Naive thymus-derived CD4-positive, alpha-beta T cell (primary cell): ENCODE measurements at regions of chr11 and their contacts with region 1.

Region 1: DNA sequence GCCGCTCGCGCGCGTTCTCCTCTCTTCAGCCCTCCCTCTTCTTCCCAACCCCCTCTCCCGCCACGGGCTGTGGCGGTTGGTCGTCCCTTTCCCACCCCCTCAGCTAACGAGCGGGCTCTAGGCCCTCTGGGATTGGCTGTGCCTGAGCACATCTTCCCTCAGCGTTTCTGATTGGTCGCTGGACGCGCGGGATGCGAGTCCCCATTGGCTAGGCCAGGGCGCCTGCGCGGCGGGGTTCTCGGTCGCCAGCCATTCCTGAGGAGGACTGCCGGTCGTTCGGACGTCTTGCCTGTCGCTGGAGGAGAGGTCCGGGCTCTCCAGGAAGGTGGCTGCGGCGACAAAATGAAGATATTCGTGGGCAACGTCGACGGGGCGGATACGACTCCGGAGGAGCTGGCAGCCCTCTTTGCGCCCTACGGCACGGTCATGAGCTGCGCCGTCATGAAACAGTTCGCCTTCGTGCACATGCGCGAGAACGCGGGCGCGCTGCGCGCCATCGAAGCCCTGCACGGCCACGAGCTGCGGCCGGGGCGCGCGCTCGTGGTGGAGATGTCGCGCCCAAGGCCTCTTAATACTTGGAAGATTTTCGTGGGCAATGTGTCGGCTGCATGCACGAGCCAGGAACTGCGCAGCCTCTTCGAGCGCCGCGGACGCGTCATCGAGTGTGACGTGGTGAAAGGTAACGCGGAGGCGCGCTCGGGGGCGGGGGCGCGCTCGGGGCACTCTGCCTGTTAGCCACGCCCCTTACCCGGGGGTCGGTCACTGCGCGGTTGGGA is at the start of gene RBM14:
- DNase-seq: peak; percentile 96 to 99 (median 99)
- ATAC-seq: peak; percentile 88
- H3K4me3 ChIP-seq: peak within 1 kb of the TSS; percentile 97
- H3K4me3 Mint-ChIP-seq: peak within 1 kb of the TSS; percentile 86 to 99 (median 98)
- H3K27ac ChIP-seq: peak within 1 kb of the TSS; percentile 83
- H3K27ac Mint-ChIP-seq: peak within 1 kb of the TSS; percentile 96 to 99 (median 98)
- H3K4me1 ChIP-seq: peaks cover 29 to 30% of the 10 kb centered on the region in 2 donors
- H3K4me1 Mint-ChIP-seq: peaks cover 26 to 55% (median 47%) of the 10 kb centered on the region in 7 donors
- H3K27me3 ChIP-seq: no peaks in the 10 kb centered on the region
- H3K27me3 Mint-ChIP-seq: peaks cover 0 to 3% (median 0%) of the 10 kb centered on the region in 5 donors
- total RNA-seq, gene RBM14: 165 to 543 (median 192) TPM

Region 2: GRCh38 chr11:66268283-66268951 is 348.1 kb before region 1 on chr11 and contains the start of gene RAB1B:
- CTCF ChIA-PET with region 1: no interaction called
- POLR2A ChIA-PET with region 1: no interaction called
- intact Hi-C with region 1: loop called in 1 of 2 experiments (anchors 5 kb)
- DNase-seq: peak; percentile 99 to 100 (median 99)
- ATAC-seq: peak; percentile 89
- H3K4me3 ChIP-seq: peak within 1 kb of the TSS; percentile 91
- H3K4me3 Mint-ChIP-seq: peak within 1 kb of the TSS; percentile 88 to 100 (median 95)
- H3K27ac ChIP-seq: peak within 1 kb of the TSS; percentile 90
- H3K27ac Mint-ChIP-seq: peak within 1 kb of the TSS; percentile 95 to 99 (median 97)
- H3K4me1 ChIP-seq: peaks cover 16 to 38% of the 10 kb centered on the region in 2 donors
- H3K4me1 Mint-ChIP-seq: peaks cover 26 to 48% (median 34%) of the 10 kb centered on the region in 7 donors
- H3K27me3 ChIP-seq: no peaks in the 10 kb centered on the region
- H3K27me3 Mint-ChIP-seq: peaks cover 0 to 3% (median 0%) of the 10 kb centered on the region in 5 donors
- total RNA-seq, gene RAB1B: 60.6 to 151 (median 70.7) TPM

Region 3: DNA sequence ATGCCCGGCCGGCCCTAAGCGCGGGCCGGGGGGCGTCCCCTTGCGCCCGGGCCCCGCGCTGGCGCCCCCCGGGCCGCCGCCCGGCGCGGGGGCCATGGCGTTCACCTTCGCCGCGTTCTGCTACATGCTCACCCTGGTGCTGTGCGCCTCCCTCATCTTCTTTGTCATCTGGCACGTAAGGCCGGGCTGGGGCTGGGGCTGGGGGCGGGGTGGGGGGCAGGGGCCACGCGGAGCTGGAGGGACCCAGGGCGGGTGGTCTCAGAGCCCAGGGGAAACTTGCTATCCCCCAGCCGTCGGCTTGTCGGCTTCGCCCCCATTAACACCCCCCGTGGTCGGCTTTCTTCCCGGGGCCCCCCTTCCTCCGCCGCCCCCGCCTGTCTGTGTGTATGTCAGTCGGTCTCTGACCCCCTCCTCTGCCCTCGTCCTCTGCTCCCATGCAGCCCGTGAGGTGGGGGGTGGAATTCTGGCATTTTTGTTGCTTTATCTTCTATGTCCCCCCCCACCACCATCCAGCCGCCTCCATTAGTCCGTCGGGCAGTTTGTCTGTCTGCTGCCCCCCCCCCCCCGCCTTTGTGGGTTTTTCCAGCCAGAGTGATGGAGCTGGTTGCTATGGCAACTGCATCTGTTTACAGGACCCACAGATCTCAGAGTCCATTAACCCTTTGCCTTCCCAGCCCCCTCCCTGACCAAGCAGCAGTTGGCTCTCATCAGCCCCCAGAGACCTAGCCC is 338.0 kb before region 1 on chr11:
- CTCF ChIA-PET with region 1: no interaction called
- POLR2A ChIA-PET with region 1: no interaction called
- intact Hi-C with region 1: no loop called
- DNase-seq: peak in 1 of 9 donors; percentile 56
- ATAC-seq: no peak
- H3K4me3 ChIP-seq: no peak overlapping the region
- H3K4me3 Mint-ChIP-seq: peak overlapping the region in 9 of 10 donors; percentile 44 to 81 (median 66)
- H3K27ac ChIP-seq: no peak overlapping the region
- H3K27ac Mint-ChIP-seq: peak overlapping the region in 4 of 9 donors; percentile 37 to 80 (median 48)
- H3K4me1 ChIP-seq: peaks cover 21 to 22% of the 10 kb centered on the region in 2 donors
- H3K4me1 Mint-ChIP-seq: peaks cover 22 to 44% (median 31%) of the 10 kb centered on the region in 7 donors
- H3K27me3 ChIP-seq: no peaks in the 10 kb centered on the region
- H3K27me3 Mint-ChIP-seq: peaks cover 0 to 14% (median 0%) of the 10 kb centered on the region in 5 donors

Region 4: DNA sequence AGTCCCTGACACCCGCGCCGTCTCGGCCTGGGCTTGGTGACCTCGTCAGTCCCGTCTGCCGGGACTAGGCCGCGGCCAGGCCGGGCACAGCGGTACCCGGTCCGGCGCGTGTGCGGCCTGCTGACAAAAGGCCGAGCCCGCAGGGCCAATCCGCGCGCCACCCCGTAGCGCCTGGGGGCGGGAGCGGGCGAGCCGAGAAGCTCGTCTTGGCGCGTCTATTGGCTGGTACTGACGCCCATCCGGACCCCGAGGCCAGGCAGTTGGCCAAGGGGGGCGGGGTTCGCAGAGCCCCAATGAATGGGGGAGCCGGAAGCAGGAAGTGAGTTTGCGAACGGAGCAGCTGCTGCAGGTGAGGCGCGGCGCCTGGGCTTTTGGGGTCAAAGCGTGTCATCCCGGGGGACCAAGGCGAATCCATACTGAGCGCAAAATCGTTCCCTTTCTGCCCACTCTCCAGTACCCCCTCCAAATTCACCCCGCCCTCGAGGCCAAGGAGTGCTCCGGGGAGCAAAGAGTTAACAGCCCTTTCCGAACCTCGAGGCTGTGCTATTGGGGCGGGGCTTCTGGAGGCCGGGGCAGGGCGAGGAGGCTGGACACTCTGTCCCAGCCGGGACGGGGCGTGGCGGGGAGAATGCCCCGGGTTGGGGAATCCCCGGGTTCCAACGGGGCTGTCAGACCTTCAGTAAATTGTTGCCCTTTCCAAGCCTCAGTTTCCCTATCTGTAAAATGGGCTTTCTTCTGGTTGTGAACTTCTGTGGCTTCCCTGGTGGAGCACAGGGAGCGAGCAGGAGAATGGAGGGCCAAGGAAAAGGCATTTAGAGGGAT is 136.2 kb before region 1 on chr11 and contains the start of gene DPP3:
- CTCF ChIA-PET with region 1: no interaction called
- POLR2A ChIA-PET with region 1: interaction called, 6 read pairs
- intact Hi-C with region 1: loop called in 1 of 2 experiments (anchors 10 kb)
- DNase-seq: peak; percentile 87 to 97 (median 95)
- ATAC-seq: peak; percentile 99
- H3K4me3 ChIP-seq: peak within 1 kb of the TSS; percentile 86
- H3K4me3 Mint-ChIP-seq: peak within 1 kb of the TSS; percentile 86 to 92 (median 90)
- H3K27ac ChIP-seq: peak within 1 kb of the TSS; percentile 90
- H3K27ac Mint-ChIP-seq: peak within 1 kb of the TSS; percentile 75 to 91 (median 90)
- H3K4me1 ChIP-seq: peaks cover 9 to 14% of the 10 kb centered on the region in 2 donors
- H3K4me1 Mint-ChIP-seq: peaks cover 9 to 37% (median 17%) of the 10 kb centered on the region in 7 donors
- H3K27me3 ChIP-seq: no peaks in the 10 kb centered on the region
- H3K27me3 Mint-ChIP-seq: no peaks in the 10 kb centered on the region
- total RNA-seq, gene DPP3: 15.8 to 75.7 (median 19.4) TPM

Region 5: GRCh38 chr11:66592457-66593302 is 23.9 kb before region 1 on chr11 and contains the starts of genes CCDC87 and CCS:
- CTCF ChIA-PET with region 1: interaction called, 3 read pairs
- POLR2A ChIA-PET with region 1: interaction called, 90 read pairs
- intact Hi-C with region 1: loop called (anchors 1 kb)
- DNase-seq: peak; percentile 94 to 98 (median 96)
- ATAC-seq: peak; percentile 98
- H3K4me3 ChIP-seq: peak within 1 kb of the TSS; percentile 98
- H3K4me3 Mint-ChIP-seq: peak within 1 kb of the TSS; percentile 89 to 100 (median 98)
- H3K27ac ChIP-seq: peak within 1 kb of the TSS; percentile 94
- H3K27ac Mint-ChIP-seq: peak within 1 kb of the TSS; percentile 90 to 100 (median 97)
- H3K4me1 ChIP-seq: peaks cover 9 to 30% of the 10 kb centered on the region in 2 donors
- H3K4me1 Mint-ChIP-seq: peaks cover 13 to 40% (median 28%) of the 10 kb centered on the region in 7 donors
- H3K27me3 ChIP-seq: no peaks in the 10 kb centered on the region
- H3K27me3 Mint-ChIP-seq: no peaks in the 10 kb centered on the region
- total RNA-seq, gene CCDC87: 0.11 to 1.2 (median 0.60) TPM in 4 of 5 experiments, not detected in the other
- total RNA-seq, gene CCS: 32.8 to 63.5 (median 42.5) TPM

Region 6: DNA sequence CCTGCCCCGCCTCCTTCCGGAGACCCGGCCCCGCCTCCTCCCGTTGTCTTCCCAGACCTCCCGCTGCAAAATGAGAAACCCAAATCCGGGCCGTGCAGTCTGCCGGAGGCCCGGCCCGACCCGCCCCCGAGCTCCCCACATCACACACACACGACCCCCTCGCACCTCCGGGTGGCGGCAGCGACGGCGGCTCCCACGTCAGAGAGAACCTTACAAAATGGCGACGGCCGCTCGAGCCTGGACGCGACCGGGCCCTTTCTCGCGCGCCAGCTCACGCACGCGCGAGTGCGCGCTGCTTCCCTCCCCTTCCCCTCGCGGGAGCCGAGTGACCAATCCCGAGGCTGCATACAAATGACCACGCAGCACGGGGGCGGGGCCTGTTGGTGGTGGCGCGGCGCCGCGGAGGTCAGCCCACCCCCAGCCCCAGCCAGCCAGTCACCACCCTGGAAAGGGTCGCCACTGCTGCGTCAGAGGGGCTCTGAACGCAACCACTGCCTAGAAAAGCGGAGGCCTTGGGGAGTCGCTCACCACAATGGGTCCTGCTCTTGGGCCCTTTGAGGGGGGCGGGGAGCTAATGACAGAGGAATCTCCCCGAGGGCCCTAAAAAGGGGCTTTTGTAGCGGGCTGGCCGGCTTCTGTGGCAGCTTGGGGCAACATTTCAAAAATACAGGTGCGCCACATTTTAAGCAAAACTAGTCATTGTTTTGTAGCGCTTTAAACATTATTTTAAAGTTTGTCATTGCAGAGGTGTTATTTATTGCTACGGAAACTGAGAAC is 61.2 kb after region 1 on chr11 and contains the start of gene RBM4B:
- CTCF ChIA-PET with region 1: interaction called, 15 read pairs
- POLR2A ChIA-PET with region 1: interaction called, 68 read pairs
- intact Hi-C with region 1: loop called (anchors 1 kb)
- DNase-seq: peak; percentile 89 to 96 (median 94)
- ATAC-seq: peak; percentile 94
- H3K4me3 ChIP-seq: peak within 1 kb of the TSS; percentile 100
- H3K4me3 Mint-ChIP-seq: peak within 1 kb of the TSS; percentile 87 to 98 (median 96)
- H3K27ac ChIP-seq: peak within 1 kb of the TSS; percentile 95
- H3K27ac Mint-ChIP-seq: peak within 1 kb of the TSS; percentile 94 to 100 (median 99)
- H3K4me1 ChIP-seq: peaks cover 23 to 31% of the 10 kb centered on the region in 2 donors
- H3K4me1 Mint-ChIP-seq: peaks cover 21 to 49% (median 37%) of the 10 kb centered on the region in 7 donors
- H3K27me3 ChIP-seq: no peaks in the 10 kb centered on the region
- H3K27me3 Mint-ChIP-seq: no peaks in the 10 kb centered on the region
- total RNA-seq, gene RBM4B: 9.8 to 27.2 (median 19.7) TPM

Region 7: GRCh38 chr11:66694732-66695207 is 78.2 kb after region 1 on chr11:
- CTCF ChIA-PET with region 1: no interaction called
- POLR2A ChIA-PET with region 1: no interaction called
- intact Hi-C with region 1: no loop called
- DNase-seq: peak; percentile 56 to 83 (median 77)
- ATAC-seq: peak; percentile 97
- H3K4me3 ChIP-seq: no peak overlapping the region
- H3K4me3 Mint-ChIP-seq: no peak overlapping the region
- H3K27ac ChIP-seq: no peak overlapping the region
- H3K27ac Mint-ChIP-seq: no peak overlapping the region
- H3K4me1 ChIP-seq: no peaks in the 10 kb centered on the region
- H3K4me1 Mint-ChIP-seq: peaks cover 0 to 5% (median 0%) of the 10 kb centered on the region in 7 donors
- H3K27me3 ChIP-seq: no peaks in the 10 kb centered on the region
- H3K27me3 Mint-ChIP-seq: peaks cover 0 to 4% (median 0%) of the 10 kb centered on the region in 5 donors

Region 8: DNA sequence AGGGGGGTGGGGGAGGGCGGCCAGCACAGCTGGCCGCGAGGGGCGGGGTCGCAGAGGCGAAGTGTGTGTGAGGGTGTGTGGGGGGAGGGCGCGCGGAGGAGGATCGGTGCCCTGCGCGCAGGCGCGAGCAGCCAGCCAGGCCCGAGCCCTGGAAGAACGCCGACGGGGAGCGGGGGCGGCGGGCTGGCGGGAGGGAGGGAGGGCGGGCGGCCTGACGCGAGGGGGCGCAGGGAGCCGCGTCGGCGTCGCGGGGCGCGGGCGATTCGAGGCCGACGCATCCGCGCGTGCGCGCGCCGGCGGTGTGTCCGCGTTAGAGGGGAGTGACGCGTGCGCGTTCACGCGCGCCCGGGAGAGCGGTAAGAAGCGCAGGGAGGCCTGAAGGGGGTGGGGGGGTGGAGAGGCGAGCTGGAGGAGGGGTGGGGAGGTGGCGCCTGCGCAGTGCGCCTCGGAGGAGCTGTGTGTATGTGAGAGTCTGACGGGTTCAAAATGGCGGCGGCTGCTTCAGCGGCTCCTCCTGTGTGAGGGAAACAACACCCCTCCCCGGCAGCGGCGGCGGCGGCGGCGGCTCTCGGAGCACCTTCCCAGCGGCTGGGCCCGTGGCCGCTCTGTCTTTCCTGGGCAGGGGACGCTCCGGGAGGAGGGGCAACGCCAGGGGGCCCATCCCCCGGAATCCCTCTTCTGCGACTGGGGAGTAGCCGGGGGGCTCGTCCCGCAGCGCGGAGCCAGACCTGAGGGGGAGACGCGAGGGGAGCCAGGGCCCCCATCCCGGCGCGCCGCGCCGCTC is 502.4 kb after region 1 on chr11 and contains the start of gene KDM2A:
- CTCF ChIA-PET with region 1: no interaction called
- POLR2A ChIA-PET with region 1: no interaction called
- intact Hi-C with region 1: loop called (anchors 5 kb)
- DNase-seq: peak; percentile 93 to 100 (median 98)
- ATAC-seq: peak; percentile 92
- H3K4me3 ChIP-seq: peak within 1 kb of the TSS; percentile 86
- H3K4me3 Mint-ChIP-seq: peak within 1 kb of the TSS; percentile 95 to 99 (median 98)
- H3K27ac ChIP-seq: peak within 1 kb of the TSS; percentile 98
- H3K27ac Mint-ChIP-seq: peak within 1 kb of the TSS; percentile 84 to 98 (median 95)
- H3K4me1 ChIP-seq: peaks cover 3 to 7% of the 10 kb centered on the region in 2 donors
- H3K4me1 Mint-ChIP-seq: peaks cover 25 to 48% (median 40%) of the 10 kb centered on the region in 7 donors
- H3K27me3 ChIP-seq: no peaks in the 10 kb centered on the region
- H3K27me3 Mint-ChIP-seq: peaks cover 0 to 5% (median 0%) of the 10 kb centered on the region in 5 donors
- total RNA-seq, gene KDM2A: 146 to 298 (median 233) TPM